PC-9 (cell line): ENCODE measurements at regions of chr7 and their contacts with region 1.

Region 1: DNA sequence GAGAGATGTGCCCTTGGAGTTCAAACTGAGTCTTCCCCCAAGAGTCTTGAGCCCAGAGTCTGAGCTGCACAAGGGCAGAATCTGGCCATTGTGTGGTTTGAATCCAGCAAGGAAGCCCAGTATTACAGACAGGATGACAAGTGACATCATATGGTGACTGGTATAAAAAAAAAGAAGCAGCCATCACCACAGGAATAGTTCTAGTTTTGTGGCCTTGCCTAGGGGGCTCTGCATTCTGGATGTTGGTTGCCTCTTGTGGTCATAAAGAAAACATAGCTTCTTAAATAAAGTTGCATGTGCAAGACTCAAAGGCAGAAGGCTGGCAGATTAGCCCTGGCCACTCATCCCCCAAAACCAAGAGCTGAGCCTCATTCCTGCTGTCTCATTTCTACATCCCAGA is 16.8 kb upstream of the LRRC72 start:
- DNase-seq: no peak
- H3K4me3 ChIP-seq: no peak overlapping the region
- H3K27ac ChIP-seq: no peak overlapping the region
- H3K4me1 ChIP-seq: no peaks in the 10 kb centered on the region
- H3K27me3 ChIP-seq: no peaks in the 10 kb centered on the region
- CTCF ChIP-seq: no peak

Region 2: DNA sequence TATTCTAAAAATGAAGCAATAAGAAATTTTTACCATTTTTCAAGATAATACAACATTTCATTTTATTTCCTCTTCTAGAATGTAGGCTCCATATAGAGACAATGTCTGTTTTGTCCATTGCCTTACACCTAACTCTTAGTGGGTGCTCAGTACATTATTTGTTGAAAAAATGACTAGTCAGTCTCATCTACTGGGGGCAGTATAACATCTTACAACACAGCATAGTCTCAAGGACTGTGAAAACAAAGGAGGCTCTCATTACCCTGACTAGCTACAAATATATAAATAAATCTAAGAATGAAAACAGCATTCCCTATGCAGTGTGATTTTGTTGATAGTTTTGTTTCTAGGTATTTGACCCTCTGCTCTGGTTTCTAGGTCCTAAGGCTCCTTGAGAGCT is 100.1 kb before region 1 on chr7:
- CTCF ChIA-PET with region 1: no interaction called
- POLR2A ChIA-PET with region 1: interaction called, 10 read pairs
- intact Hi-C with region 1: no loop called
- DNase-seq: no peak
- H3K4me3 ChIP-seq: no peak overlapping the region
- H3K27ac ChIP-seq: no peak overlapping the region
- H3K4me1 ChIP-seq: no peaks in the 10 kb centered on the region
- H3K27me3 ChIP-seq: no peaks in the 10 kb centered on the region
- CTCF ChIP-seq: no peak